Sigmoid colon (tissue), 7 donors: ENCODE measurements at regions of chr1 and their contacts with region 1.

Region 1: DNA sequence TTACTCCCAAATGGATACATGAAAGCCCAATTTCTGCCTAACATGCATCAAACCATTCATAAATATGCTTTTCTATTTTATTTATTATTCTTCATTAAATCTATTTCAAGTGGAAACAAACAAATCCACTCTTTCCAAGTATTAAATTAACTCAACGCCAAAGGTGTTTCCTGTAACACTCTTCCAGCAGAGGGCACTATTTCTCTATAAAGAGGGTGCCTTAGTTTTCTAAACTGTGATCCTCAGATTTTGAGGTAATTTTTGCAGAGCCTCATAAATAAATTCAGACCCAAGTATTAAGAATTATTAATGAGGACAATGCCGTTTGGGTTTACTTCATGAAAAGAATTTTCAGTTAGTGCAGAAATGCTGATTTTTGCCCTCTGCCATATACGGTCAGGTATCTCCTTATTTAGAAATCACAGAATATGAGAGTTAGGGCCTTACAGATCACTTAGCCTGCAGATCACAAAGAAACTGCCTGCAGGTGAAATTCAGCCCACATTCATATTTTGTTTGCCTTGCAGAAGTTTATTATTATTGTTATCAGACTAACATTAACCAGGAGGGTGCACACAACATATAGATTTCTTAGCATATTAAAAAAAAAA is 40.1 kb upstream of the MYSM1 start:
- DNase-seq: no peak
- H3K4me3 ChIP-seq: no peak overlapping the region
- H3K27ac ChIP-seq: no peak overlapping the region
- H3K4me1 ChIP-seq: peaks cover 0 to 9% (median 0%) of the 10 kb centered on the region in 4 donors
- H3K27me3 ChIP-seq: no peaks in the 10 kb centered on the region
- CTCF ChIP-seq: peak; percentile 53 to 87 (median 72)
- EP300 ChIP-seq: no peak
- POLR2A ChIP-seq: no peak

Region 2: DNA sequence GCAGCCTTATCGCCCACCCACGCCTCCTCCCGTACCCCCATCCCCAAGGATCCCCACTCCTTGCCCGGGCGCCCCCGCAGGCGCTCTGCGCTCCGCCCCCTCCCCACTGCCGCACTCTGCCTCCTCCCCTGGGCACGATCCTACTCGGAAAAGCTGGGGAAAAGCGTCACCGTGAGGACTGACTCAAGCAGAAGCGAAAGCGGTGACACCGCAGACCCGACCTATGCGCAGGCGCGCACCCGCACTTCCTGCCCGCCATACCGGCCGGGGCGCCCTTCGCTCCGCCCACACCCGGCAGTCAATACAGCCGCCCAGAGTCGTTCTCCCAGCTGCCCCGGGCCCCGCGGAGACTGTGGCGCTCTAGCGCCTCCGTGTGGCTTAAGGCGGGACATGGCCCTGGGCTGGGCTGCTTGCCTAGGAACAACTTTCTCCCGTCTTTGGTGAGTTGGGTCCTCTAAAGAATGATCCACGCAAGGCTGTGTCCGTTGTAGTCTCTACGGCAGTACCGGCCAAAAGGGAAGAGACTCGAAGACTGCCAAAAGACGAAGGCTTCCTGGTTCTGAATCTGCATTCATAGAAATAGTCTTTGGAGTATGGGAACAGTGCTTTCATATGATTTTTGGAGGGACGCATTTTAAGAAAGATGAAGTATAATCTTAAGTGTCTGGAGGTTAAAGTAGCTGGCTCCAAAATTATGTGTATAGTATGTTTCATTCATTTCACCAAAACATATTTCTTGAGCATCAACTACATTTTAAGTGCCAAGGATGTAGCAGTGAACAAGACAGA is 193.2 kb before region 1 on chr1 and contains the start of gene OMA1:
- intact Hi-C with region 1: no loop called
- DNase-seq: peak; percentile 99
- H3K4me3 ChIP-seq: peak within 1 kb of the TSS; percentile 76 to 93 (median 86)
- H3K27ac ChIP-seq: peak within 1 kb of the TSS; percentile 98 to 100 (median 100)
- H3K4me1 ChIP-seq: peaks cover 0 to 35% (median 14%) of the 10 kb centered on the region in 4 donors
- H3K27me3 ChIP-seq: no peaks in the 10 kb centered on the region
- CTCF ChIP-seq: peak; percentile 90 to 98 (median 96)
- EP300 ChIP-seq: peak in 1 of 4 donors; percentile 71
- POLR2A ChIP-seq: peak; percentile 77 to 88
- total RNA-seq, gene OMA1: 34.3 to 74.9 (median 61.4) TPM

Region 3: DNA sequence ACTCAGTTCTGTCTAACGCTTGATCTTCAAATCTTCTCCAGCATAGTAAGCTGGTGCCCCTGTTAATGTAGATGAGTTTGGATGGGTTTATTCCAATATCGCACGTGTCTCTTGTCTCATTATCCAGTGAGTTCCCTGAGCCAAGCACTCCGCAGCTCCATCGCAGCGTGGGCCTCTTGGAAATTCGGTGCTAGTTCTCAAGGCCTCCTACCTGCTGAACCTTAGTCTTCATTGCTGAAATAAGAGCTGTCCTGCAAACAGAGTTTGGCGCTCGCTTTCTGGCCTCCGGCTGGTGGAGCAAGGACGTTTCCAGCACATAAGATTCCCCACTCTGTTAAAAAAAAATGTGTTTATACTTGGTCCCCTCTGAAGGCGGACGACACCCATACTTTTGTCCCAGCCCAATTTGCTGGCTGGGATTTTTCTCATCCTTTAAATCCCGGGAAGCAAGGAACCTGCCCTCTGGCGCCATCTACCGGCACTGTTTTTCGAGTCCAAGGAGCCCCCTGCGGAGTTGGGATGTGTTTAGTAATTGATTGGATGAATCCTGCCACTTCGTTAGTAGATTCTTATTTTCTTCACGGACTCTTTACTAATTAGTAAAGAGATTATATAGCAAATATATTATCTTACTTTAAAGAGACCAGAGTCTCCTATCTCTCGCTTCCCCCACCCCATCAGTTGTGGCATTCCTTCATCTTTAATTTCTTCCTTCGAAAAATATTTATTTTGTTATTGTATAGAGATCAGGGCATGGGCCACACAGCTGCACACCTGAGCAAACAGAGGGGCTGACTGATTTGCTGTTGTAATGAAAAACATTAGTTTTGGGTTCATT is 29.2 kb after region 1 on chr1:
- intact Hi-C with region 1: loop called (anchors 1 kb)
- DNase-seq: peak; percentile 89
- H3K4me3 ChIP-seq: no peak overlapping the region
- H3K27ac ChIP-seq: peak overlapping the region in 2 of 4 donors; percentile 11 to 27
- H3K4me1 ChIP-seq: peaks cover 0 to 36% (median 28%) of the 10 kb centered on the region in 4 donors
- H3K27me3 ChIP-seq: no peaks in the 10 kb centered on the region
- CTCF ChIP-seq: peak; percentile 36 to 84 (median 66)
- EP300 ChIP-seq: no peak
- POLR2A ChIP-seq: no peak

Region 4: DNA sequence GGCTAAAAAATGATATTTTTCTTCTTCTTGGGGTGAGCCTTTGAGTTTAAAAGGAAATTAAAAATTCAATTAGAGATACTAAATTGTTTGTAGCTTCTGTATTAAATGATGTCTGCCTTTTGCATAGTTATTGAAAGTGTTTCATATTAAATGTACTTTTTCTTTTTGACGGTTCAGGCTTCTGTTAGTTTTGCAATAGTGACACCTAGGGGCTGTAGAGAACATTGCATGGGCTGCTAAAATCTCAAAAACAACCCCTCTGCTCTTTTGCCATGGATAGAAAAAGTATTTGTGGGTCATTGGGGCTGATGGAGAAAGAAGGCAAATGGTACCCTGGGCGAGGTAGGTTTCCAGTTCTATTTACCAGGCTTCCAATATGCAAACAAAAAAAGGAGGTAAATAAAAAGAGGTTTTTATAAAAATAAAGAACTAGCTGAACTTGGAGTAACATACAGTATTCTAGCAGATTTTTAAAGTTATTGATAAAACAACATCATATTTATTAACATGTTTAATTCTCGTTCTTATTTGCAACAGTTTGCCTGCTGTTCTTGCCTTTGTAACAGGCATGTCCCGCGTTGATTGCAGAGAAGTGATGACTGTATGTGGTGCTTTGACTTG is 959.4 kb after region 1 on chr1:
- intact Hi-C with region 1: loop called (anchors 5 kb)
- DNase-seq: no peak
- H3K4me3 ChIP-seq: no peak overlapping the region
- H3K27ac ChIP-seq: peak overlapping the region in 3 of 4 donors; percentile 24 to 56 (median 51)
- H3K4me1 ChIP-seq: peaks cover 0 to 64% (median 44%) of the 10 kb centered on the region in 4 donors
- H3K27me3 ChIP-seq: no peaks in the 10 kb centered on the region
- CTCF ChIP-seq: peak; percentile 84 to 96 (median 96)
- EP300 ChIP-seq: no peak
- POLR2A ChIP-seq: no peak

Region 5: GRCh38 chr1:59759156-59759925 is 1019.4 kb after region 1 on chr1:
- intact Hi-C with region 1: loop called (anchors 1 kb)
- DNase-seq: peak; percentile 94
- H3K4me3 ChIP-seq: peak overlapping the region in 3 of 4 donors; percentile 23 to 34 (median 29)
- H3K27ac ChIP-seq: peak overlapping the region; percentile 36 to 76 (median 72)
- H3K4me1 ChIP-seq: peaks cover 0 to 33% (median 15%) of the 10 kb centered on the region in 4 donors
- H3K27me3 ChIP-seq: no peaks in the 10 kb centered on the region
- CTCF ChIP-seq: peak; percentile 92 to 98 (median 96)
- EP300 ChIP-seq: no peak
- POLR2A ChIP-seq: no peak

Region 6: GRCh38 chr1:59947047-59947938 is 1207.3 kb after region 1 on chr1:
- intact Hi-C with region 1: loop called (anchors 10 kb)
- DNase-seq: peak; percentile 68
- H3K4me3 ChIP-seq: no peak overlapping the region
- H3K27ac ChIP-seq: no peak overlapping the region
- H3K4me1 ChIP-seq: peaks cover 0 to 6% (median 0%) of the 10 kb centered on the region in 4 donors
- H3K27me3 ChIP-seq: no peaks in the 10 kb centered on the region
- CTCF ChIP-seq: peak; percentile 66 to 84 (median 80)
- EP300 ChIP-seq: no peak
- POLR2A ChIP-seq: no peak